Esophagus squamous epithelium (tissue), 5 donors: ENCODE measurements at regions of chr15 and their contacts with region 1.

Region 1: DNA sequence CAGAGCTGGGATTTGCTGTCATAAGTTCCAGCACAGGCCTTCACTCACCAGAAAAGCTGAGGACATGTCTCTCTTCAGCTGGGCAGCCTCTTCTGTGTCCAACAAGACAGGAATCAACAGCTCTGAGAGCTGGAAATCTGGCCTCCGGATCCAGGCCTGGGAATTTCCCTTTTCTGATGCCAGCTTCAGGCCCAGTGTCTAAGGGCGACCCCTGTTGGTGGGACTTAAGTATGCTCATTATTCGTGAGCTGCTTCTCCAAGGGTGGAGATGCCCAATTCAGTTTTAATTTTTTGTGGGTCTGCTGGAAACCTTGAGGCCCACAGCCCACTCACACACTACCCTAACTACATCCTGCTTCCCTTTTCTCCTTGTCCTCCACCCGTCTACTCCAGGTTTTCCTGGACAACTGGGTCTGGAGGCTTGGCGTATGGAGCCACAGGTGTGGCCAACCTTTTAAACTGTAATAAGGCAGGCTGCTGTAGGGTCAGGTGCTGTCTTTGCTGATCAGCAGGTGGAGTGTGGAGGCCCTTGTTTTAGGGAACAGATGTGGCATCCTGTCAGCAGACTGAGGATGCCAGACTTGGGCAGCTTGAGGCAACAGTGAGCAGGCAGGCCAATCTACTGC is 2.6 kb upstream of the CEMIP start:
- DNase-seq: no peak
- H3K4me3 ChIP-seq: no peak overlapping the region
- H3K27ac ChIP-seq: peak overlapping the region; percentile 68 to 86 (median 70)
- H3K4me1 ChIP-seq: peaks cover 31 to 52% (median 43%) of the 10 kb centered on the region in 3 donors
- H3K27me3 ChIP-seq: peaks cover 0 to 40% (median 3%) of the 10 kb centered on the region in 4 donors
- CTCF ChIP-seq: peak; percentile 66 to 94 (median 81)
- POLR2A ChIP-seq: no peak

Region 2: DNA sequence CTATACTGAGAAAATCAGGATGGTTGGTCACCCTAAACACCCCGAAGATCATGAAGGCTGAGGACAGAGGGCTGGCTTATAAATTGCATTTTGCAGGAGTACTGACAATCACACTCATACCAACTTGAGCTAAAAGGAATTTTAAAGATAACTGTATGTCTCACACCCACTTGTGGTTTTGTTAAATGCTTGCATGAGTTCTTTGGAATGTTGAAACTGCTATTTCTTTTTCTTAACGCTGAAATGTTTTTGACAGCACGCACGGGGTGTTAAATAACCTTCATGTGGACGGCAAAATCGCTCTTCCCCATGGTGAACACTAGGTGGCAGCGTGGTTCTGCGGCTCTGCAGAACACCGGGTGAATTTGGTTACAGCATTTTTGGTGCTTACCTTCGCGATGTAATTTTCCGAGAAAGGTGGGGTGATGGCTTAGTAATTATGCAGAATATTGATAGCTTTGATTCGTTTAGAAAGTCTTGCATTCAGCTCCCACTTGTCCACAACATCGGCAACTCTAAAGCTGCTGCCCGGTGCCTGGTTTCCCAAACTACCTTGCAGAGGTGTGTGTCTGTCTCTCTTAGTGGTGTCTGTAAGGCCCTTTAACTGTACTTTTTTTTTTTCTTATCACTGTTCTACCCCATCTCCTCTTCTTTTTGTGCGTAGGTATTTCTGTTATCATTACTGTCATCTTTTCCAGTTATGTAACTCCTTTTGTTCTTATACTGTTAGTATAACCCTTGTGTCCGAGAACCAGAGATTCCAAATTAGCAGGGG is 320.7 kb before region 1 on chr15:
- intact Hi-C with region 1: loop called (anchors 5 kb)
- DNase-seq: no peak
- H3K4me3 ChIP-seq: no peak overlapping the region
- H3K27ac ChIP-seq: no peak overlapping the region
- H3K4me1 ChIP-seq: peaks cover 0 to 15% (median 10%) of the 10 kb centered on the region in 3 donors
- H3K27me3 ChIP-seq: peaks cover 0 to 14% (median 0%) of the 10 kb centered on the region in 4 donors
- CTCF ChIP-seq: peak; percentile 78 to 94 (median 88)
- POLR2A ChIP-seq: no peak

Region 3: GRCh38 chr15:80567721-80568157 is 208.8 kb before region 1 on chr15:
- intact Hi-C with region 1: loop called (anchors 5 kb)
- DNase-seq: no peak
- H3K4me3 ChIP-seq: no peak overlapping the region
- H3K27ac ChIP-seq: no peak overlapping the region
- H3K4me1 ChIP-seq: peaks cover 0 to 11% (median 4%) of the 10 kb centered on the region in 3 donors
- H3K27me3 ChIP-seq: no peaks in the 10 kb centered on the region
- CTCF ChIP-seq: peak; percentile 35 to 84 (median 78)
- POLR2A ChIP-seq: no peak

Region 4: GRCh38 chr15:80710635-80711554 is 65.6 kb before region 1 on chr15:
- intact Hi-C with region 1: loop called (anchors 10 kb)
- DNase-seq: no peak
- H3K4me3 ChIP-seq: no peak overlapping the region
- H3K27ac ChIP-seq: peak overlapping the region in 2 of 4 donors; percentile 16 to 51
- H3K4me1 ChIP-seq: peaks cover 7 to 49% (median 18%) of the 10 kb centered on the region in 3 donors
- H3K27me3 ChIP-seq: no peaks in the 10 kb centered on the region
- CTCF ChIP-seq: no peak
- POLR2A ChIP-seq: no peak

Region 5: GRCh38 chr15:80825376-80826015 is 49.0 kb after region 1 on chr15:
- intact Hi-C with region 1: no loop called
- DNase-seq: no peak
- H3K4me3 ChIP-seq: no peak overlapping the region
- H3K27ac ChIP-seq: no peak overlapping the region
- H3K4me1 ChIP-seq: peaks cover 0 to 10% (median 0%) of the 10 kb centered on the region in 3 donors
- H3K27me3 ChIP-seq: peaks cover 0 to 36% (median 0%) of the 10 kb centered on the region in 4 donors
- CTCF ChIP-seq: no peak
- POLR2A ChIP-seq: no peak

Region 6: DNA sequence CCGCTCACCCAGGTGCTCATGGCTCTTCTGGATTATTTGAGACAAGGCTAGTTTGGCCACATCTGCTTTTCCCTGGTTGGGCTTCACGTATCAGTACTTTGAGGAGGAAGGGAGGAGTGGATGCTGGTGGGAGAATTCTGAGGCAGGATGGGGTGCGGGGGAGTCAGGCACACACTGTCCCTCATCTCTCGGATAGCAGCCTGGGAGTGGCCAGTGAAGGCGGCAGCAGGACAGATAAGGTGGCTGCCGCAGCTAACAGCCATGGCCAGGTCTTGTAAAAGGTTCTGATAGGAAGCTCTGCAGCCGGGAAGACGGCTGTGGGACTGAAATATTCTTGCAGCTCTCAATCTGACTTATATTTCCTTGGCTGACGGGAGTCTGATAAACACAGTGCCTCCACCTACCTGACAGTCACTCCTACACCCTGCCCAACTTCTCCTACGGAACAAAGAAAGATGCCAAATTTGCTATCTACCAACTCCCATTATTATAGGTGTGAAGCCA is 125.8 kb after region 1 on chr15:
- intact Hi-C with region 1: no loop called
- DNase-seq: no peak
- H3K4me3 ChIP-seq: no peak overlapping the region
- H3K27ac ChIP-seq: no peak overlapping the region
- H3K4me1 ChIP-seq: no peaks in the 10 kb centered on the region
- H3K27me3 ChIP-seq: no peaks in the 10 kb centered on the region
- CTCF ChIP-seq: no peak
- POLR2A ChIP-seq: no peak

Region 7: DNA sequence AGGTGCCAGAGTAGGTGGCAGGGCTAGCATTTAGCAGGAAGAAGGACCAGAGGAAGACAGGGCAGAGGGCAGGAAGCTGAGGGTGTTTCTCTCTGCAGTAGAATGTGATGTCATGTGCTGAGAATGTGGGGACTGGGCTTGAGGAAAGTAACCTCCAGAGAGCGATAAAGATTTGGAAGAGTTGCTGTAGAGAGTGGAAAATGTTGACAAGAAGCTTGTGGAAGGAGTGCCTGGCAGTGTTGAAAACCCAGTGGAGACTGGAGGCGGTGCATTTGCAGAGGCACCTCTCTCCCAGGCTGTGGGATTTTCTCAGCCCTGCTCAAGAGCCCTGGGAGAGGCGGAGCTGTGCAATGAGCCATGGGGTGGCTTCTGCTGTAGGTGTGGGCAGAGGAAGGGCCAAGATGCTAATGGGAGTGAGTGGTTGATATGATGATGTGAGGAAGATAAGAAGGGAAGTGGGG is 158.3 kb after region 1 on chr15:
- intact Hi-C with region 1: loop called (anchors 10 kb)
- DNase-seq: no peak
- H3K4me3 ChIP-seq: no peak overlapping the region
- H3K27ac ChIP-seq: no peak overlapping the region
- H3K4me1 ChIP-seq: no peaks in the 10 kb centered on the region
- H3K27me3 ChIP-seq: no peaks in the 10 kb centered on the region
- CTCF ChIP-seq: no peak
- POLR2A ChIP-seq: no peak

Region 8: GRCh38 chr15:80970018-80970658 is 193.6 kb after region 1 on chr15:
- intact Hi-C with region 1: loop called (anchors 10 kb)
- DNase-seq: no peak
- H3K4me3 ChIP-seq: no peak overlapping the region
- H3K27ac ChIP-seq: no peak overlapping the region
- H3K4me1 ChIP-seq: peaks cover 0 to 20% (median 4%) of the 10 kb centered on the region in 3 donors
- H3K27me3 ChIP-seq: no peaks in the 10 kb centered on the region
- CTCF ChIP-seq: peak; percentile 75 to 90 (median 84)
- POLR2A ChIP-seq: no peak

Region 9: GRCh38 chr15:81336568-81336967 is 560.0 kb after region 1 on chr15:
- intact Hi-C with region 1: no loop called
- DNase-seq: no peak
- H3K4me3 ChIP-seq: no peak overlapping the region
- H3K27ac ChIP-seq: no peak overlapping the region
- H3K4me1 ChIP-seq: peaks cover 0 to 18% (median 0%) of the 10 kb centered on the region in 3 donors
- H3K27me3 ChIP-seq: no peaks in the 10 kb centered on the region
- CTCF ChIP-seq: peak in 4 of 6 experiments; percentile 13 to 46 (median 28)
- POLR2A ChIP-seq: no peak